Activated CD4-positive, alpha-beta memory T cell treated with anti-CD3 and anti-CD28 coated beads for 36 hours (primary cell): ENCODE measurements at regions of chr13 and their contacts with region 1.

Region 1: DNA sequence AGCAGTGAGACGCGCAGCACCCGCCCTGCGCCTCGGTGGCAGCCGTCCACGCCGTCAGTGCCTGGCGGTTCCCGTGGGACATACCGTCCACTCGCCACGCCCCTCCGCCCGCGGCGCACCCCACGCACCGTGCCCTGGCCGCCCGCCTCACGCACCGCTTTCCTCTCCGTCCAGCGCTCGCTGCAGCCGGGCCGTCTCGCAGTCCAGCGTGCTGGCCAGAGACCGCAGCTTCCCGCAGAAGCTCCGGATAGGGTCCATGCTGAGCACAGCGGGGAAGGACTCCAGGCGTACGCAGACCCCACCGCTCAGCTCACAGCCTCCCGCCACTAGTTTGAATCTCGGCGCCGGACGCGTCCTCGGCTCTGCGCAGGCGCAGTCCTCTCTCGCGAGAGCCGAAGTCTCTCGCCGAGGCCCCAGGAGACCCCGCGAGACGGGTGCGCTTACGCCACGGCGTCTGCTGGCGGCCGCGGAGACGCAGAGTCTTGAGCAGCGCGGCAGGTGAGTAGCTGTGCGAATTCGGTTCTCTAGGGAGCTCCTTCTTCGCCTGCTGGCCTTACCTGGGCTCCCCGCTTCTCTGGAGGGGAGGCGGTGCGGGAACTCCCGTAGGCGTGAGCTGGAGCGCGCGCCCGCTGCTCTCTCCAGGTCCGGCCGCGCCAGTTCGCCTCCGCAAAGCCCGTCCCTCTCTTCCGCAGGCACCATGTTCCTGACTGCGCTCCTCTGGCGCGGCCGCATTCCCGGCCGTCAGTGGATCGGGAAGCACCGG is at the starts of genes MRPL57 and SKA3:
- DNase-seq: peak; percentile 96
- H3K4me3 Mint-ChIP-seq: peak within 1 kb of the TSS; percentile 99
- H3K27ac Mint-ChIP-seq: peak within 1 kb of the TSS; percentile 96
- H3K4me1 Mint-ChIP-seq: peaks cover 18% of the 10 kb centered on the region
- H3K27me3 Mint-ChIP-seq: no peaks in the 10 kb centered on the region
- total RNA-seq, gene MRPL57: 20.8 to 23.1 TPM
- total RNA-seq, gene SKA3: 34.0 to 36.2 TPM

Region 2: GRCh38 chr13:21106089-21106488 is 70.3 kb before region 1 on chr13:
- CTCF ChIA-PET with region 1: no interaction called
- POLR2A ChIA-PET with region 1: no interaction called
- intact Hi-C with region 1: loop called (anchors 1 kb)
- DNase-seq: no peak
- H3K4me3 Mint-ChIP-seq: no peak overlapping the region
- H3K27ac Mint-ChIP-seq: no peak overlapping the region
- H3K4me1 Mint-ChIP-seq: no peaks in the 10 kb centered on the region
- H3K27me3 Mint-ChIP-seq: no peaks in the 10 kb centered on the region